OCI-LY7 (cell line): ENCODE measurements at regions of chr2 and their contacts with region 1.

Region 1: GRCh38 chr2:127820080-127820668 is 9.2 kb upstream of the WDR33 start:
- DNase-seq: peak; percentile 70
- H3K4me3 ChIP-seq: no peak overlapping the region
- H3K27ac ChIP-seq: no peak overlapping the region
- H3K4me1 ChIP-seq: no peaks in the 10 kb centered on the region
- CTCF ChIP-seq: no peak

Region 2: DNA sequence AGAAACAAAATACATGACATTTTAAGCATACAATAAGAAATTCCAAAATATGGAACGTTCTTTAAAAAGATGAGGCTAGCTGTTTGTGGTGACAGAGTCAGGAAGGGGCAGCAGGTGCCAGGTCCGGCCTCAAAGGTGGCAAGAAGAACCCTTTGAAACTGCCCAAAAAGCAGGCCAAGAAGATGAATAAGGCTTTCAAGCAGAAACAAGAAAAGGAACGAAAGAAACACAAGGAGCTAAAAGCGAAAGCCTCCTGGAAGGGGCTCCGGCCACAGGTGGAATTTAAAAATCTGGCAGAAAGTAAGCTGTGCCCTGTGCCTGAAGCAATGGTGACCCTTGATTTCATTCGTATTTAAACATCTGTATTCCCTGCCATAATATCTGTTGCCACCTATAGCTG is 14.7 kb before region 1 on chr2:
- CTCF ChIA-PET with region 1: interaction called, 3 read pairs
- POLR2A ChIA-PET with region 1: interaction called, 13 read pairs
- intact Hi-C with region 1: no loop called
- DNase-seq: no peak
- H3K4me3 ChIP-seq: peak overlapping the region; percentile 41
- H3K27ac ChIP-seq: peak overlapping the region; percentile 31
- H3K4me1 ChIP-seq: peaks cover 55% of the 10 kb centered on the region
- CTCF ChIP-seq: no peak